ENCODE measurements at regions of chr10 and their contacts with region 1.

Region 1: GRCh38 chr10:56991591-56992069 is 630.6 kb upstream of the ZWINT start:
- DNase-seq: no peak
- ATAC-seq: no peak
- H3K4me3 ChIP-seq: no peak overlapping the region
- H3K27ac ChIP-seq: no peak overlapping the region
- H3K4me1 ChIP-seq: no peaks in the 10 kb centered on the region
- H3K27me3 ChIP-seq: no peaks in the 10 kb centered on the region
- CTCF ChIP-seq: no peak

Region 2: DNA sequence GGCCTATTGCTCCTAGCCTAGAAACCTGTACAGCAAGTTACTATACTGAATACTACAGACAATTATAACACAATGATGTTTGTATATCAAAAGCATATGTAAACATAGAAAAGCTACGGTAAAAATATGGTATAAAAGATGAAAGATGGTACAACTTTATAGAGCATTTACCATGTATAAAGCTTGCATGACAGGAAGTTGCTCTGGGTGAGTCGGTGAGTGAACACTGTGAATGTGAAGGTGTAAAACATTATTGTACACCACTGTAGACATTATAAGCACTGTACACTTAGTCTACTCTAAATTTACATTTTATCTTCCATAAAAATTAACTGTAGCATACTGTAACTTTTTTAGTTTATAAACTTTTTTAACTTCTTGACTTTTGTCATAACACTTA is 43.7 kb after region 1 on chr10:
- intact Hi-C with region 1: loop called in 1 of 2 experiments (anchors 2 kb)
- DNase-seq: no peak
- ATAC-seq: no peak
- H3K4me3 ChIP-seq: no peak overlapping the region
- H3K27ac ChIP-seq: no peak overlapping the region
- H3K4me1 ChIP-seq: no peaks in the 10 kb centered on the region
- H3K27me3 ChIP-seq: no peaks in the 10 kb centered on the region
- CTCF ChIP-seq: no peak